ENCODE measurements at regions of chr5 and their contacts with region 1.

Region 1: DNA sequence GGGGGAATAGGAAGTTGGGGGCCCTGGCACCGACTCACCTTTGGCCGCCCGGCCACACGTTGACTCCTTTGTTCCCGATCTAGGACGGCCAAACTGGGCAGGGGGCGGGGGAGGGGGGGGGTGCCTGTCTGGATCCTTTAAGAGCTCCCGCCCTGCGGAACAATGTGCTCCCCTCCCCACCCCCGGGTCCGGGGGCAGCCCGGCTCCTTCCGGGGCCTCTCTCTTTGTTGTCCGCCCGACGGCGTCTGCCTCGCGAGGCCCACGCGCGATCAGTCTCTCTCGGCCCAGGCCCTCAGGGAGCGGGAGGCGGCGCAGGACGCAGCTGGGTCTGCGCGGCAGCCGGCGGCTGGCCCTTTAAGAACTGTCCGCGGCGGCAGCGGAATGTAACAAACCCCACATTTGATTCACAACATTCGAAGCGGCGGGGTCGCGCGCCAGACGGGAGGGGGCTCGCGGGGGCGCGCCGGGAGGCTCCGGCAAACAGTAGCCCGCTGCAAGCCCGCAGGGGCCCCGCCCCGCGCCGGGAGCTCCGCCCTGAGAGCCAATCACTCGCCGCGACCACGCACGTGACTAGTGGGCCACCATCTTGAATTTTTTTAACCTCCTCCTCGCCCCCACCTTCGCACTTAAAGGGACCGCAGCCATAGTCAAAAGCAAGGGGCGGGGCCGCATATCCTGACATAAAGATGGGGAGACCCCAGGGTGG is at the start of gene RNF44:
- DNase-seq: peak; percentile 86
- H3K4me3 ChIP-seq: peak within 1 kb of the TSS; percentile 86
- H3K27me3 ChIP-seq: no peaks in the 10 kb centered on the region
- CTCF ChIP-seq: no peak
- polyA plus RNA-seq, gene RNF44: 3.1 and 6.0 TPM in 2 replicates

Region 2: DNA sequence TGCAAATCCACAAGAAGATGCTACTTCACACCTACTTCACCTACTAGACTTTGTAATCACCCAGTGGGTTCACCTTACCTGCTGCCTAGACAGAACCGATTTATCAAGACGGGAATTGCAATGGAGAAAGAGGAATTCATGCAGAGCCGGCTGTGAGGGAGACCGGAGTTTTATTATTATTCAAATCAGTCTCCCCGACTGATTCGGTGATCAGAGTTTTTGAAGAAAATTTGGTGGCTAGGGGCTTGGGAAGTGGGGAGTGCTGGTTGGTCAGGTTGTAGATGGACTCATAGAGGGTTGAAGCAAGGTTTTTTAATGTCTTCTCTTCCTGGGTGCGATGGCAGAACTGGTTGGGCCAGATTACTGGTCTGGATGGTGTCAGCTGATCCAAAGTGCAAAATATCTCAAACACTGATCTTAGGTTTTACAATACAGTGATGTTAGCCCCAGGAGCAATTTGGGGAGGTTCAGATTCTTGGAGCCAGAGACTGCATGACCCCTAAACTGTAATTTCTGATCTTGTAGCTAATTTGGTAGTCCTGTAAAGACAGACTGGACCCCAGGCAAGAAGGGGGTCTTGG is 1035.2 kb before region 1 on chr5:
- CTCF ChIA-PET with region 1: no interaction called
- POLR2A ChIA-PET with region 1: interaction called, 12 read pairs
- DNase-seq: no peak
- H3K4me3 ChIP-seq: no peak overlapping the region
- H3K27me3 ChIP-seq: no peaks in the 10 kb centered on the region
- CTCF ChIP-seq: no peak

Region 3: GRCh38 chr5:176629853-176630712 is 93.0 kb after region 1 on chr5 and contains the starts of genes EIF4E1B and SNCB:
- CTCF ChIA-PET with region 1: no interaction called
- POLR2A ChIA-PET with region 1: no interaction called
- DNase-seq: no peak
- H3K4me3 ChIP-seq: peak within 1 kb of the TSS; percentile 26
- H3K27me3 ChIP-seq: peaks cover 51% of the 10 kb centered on the region
- CTCF ChIP-seq: no peak
- polyA plus RNA-seq, gene EIF4E1B: not detected in 2 replicates
- polyA plus RNA-seq, gene SNCB: not detected in 2 replicates

Measured in BJ (cell line).